ENCODE measurements at regions of chr16 and their contacts with region 1.

Region 1: DNA sequence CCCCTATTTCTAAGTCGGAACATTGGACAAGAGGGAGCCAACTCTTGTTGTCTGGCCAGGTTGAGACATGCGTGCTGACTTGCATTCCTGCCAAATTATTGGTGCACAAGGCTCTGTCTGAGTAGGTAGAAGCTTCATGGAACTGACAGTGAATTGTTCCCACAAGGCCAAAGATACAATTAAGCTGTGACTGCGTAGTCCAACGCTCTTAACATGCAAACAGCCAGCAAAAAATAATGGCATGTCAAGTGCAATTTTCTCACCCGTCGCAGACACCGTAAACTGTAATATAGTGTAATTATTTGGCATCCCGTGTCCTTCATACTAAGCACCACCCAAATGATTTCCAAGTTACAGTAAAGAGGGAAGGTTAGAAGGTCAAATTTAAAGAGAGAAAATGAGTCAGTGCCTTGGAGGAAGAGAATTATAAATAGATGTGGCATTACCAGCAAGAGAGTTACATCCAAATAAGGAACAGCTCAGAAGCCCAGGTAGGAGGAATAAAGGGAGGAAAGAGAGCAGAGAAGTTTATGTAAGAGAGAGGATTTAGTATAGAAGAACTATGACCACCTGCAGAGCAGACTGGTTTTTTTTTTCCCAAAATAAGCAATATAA is 21.8 kb downstream of the CDH8 start:
- DNase-seq: no peak
- H3K4me3 ChIP-seq: no peak overlapping the region
- H3K27ac ChIP-seq: no peak overlapping the region
- H3K4me1 ChIP-seq: no peaks in the 10 kb centered on the region
- H3K27me3 ChIP-seq: no peaks in the 10 kb centered on the region
- CTCF ChIP-seq: no peak
- POLR2A ChIP-seq: no peak

Region 2: DNA sequence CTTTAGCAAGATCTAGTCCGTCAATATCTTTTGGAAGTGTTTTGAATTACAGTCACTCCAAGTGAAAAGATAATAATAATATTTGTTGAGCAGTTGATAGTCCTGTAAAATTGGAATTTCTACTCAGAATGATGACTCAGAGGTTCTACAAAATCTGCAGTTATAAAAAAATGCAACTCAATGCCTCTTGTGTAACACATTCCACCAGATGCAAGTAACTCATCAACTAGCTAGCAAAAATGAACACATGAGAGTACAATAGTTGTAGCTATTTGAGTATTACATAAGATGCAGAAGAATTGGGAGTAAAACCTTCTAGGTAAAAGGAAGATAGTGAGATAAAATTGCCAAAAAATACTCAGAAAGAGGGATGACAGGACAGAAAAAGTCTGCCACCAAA is 155.4 kb before region 1 on chr16:
- intact Hi-C with region 1: no loop called
- DNase-seq: no peak
- H3K4me3 ChIP-seq: no peak overlapping the region
- H3K27ac ChIP-seq: no peak overlapping the region
- H3K4me1 ChIP-seq: no peaks in the 10 kb centered on the region
- H3K27me3 ChIP-seq: no peaks in the 10 kb centered on the region
- CTCF ChIP-seq: no peak
- POLR2A ChIP-seq: no peak

Region 3: GRCh38 chr16:62130101-62130500 is 115.7 kb after region 1 on chr16:
- intact Hi-C with region 1: loop called (anchors 5 kb)
- DNase-seq: no peak
- H3K4me3 ChIP-seq: no peak overlapping the region
- H3K27ac ChIP-seq: no peak overlapping the region
- H3K4me1 ChIP-seq: no peaks in the 10 kb centered on the region
- H3K27me3 ChIP-seq: no peaks in the 10 kb centered on the region
- CTCF ChIP-seq: no peak
- POLR2A ChIP-seq: no peak

Measured in breast epithelium (tissue), 4 donors.